ENCODE measurements at regions of chr5 and their contacts with region 1.

Region 1: DNA sequence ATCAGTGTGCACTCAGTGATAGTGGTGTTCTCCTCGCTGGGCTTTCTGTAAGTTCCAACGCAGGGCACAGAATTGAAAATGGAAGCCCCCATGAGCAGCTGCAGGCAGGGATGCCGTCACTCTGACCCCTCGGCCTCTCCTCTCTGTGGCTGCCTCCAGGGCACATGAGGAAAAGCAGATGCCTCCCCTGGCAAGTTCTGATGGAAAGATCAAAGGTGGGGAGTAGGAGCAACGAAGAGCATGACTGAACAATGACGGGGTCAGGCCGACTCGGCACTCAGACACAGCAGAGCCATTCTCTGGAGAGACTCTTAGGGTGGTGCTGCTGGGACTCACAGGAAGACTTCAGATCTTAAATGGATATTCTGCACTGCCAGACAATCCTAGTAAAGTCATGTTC is 65.6 kb upstream of the CKMT2 start:
- DNase-seq: no peak
- H3K27ac ChIP-seq: no peak overlapping the region
- CTCF ChIP-seq: no peak

Region 2: DNA sequence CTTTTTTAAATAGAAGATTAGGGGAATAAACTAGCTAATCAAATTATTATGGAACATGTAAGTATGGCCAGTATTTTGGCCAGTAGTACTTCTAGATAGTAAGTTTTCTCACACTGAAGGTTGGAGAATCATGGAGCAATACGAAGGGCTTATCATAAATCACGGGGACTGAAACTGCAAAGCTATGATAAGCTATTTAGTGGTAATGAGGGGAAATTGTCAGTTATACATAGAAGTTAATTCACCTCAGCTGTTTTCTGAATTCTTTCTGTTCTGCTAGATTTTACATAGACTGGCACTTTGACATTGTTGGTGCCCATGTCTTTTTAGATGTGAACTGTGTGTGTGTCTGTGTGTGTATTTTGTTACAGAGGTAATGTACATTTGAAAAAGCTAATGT is 714.2 kb before region 1 on chr5:
- CTCF ChIA-PET with region 1: interaction called, 11 read pairs
- POLR2A ChIA-PET with region 1: no interaction called
- DNase-seq: no peak
- H3K27ac ChIP-seq: no peak overlapping the region
- CTCF ChIP-seq: no peak